ENCODE measurements at regions of chr12 and their contacts with region 1.

Region 1: DNA sequence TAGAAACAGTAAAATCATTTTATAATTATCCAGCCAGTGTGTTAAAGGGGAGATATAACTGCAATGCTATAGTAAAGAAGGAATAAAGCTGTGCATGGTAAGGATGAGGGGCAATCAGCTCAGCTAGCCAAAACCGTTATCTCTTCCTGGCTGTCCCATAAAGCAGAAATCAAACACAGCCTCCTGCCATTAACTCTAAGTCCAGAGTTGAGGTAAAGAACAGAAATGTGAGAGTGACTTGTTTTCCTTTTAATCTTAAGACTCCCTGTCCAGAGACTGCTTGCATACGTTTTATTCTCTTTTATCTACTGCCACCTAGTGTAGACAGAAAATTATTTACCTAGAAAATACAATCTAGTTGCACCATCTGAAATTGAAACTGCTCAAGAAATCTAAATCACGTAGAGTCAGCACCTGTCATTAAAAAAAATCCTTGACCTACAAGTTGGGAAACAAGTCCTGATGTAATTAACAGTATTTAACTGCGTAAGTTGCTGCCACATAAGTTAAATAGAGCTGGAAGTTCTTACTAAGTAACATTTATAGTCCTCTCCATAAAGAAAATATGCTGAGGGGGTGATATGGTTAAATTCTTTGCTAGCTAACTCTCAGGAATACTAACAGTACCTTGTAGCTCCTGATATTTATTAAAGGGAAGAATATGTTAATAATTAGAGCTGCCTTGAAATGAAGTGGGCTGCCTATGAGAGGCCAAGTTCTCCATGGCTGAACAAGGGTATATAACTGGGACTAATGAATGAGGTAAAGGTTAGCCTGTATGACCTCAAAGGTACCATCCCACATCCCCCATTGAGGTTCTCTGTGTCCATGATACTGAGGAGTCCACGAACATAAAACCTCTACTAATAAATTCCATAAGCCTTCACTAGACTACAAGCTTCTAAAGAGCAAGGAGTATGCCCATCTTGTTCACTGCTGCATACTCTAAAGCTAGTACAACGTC is 62.7 kb downstream of the GALNT4 start:
- DNase-seq: no peak
- H3K4me3 ChIP-seq: peak overlapping the region in 1 of 4 donors; percentile 21
- H3K27ac ChIP-seq: peak overlapping the region in 2 of 5 donors; percentile 46 to 75
- H3K4me1 ChIP-seq: peaks cover 0 to 8% of the 10 kb centered on the region in 2 donors
- H3K27me3 ChIP-seq: no peaks in the 10 kb centered on the region
- CTCF ChIP-seq: peak; percentile 37 to 91 (median 71)
- POLR2A ChIP-seq: no peak

Region 2: GRCh38 chr12:89019408-89020120 is 442.4 kb before region 1 on chr12:
- intact Hi-C with region 1: loop called (anchors 5 kb)
- DNase-seq: peak; percentile 73 to 94 (median 81)
- H3K4me3 ChIP-seq: peak overlapping the region in 1 of 4 donors; percentile 51
- H3K27ac ChIP-seq: no peak overlapping the region
- H3K4me1 ChIP-seq: peaks cover 0 to 14% of the 10 kb centered on the region in 2 donors
- H3K27me3 ChIP-seq: no peaks in the 10 kb centered on the region
- CTCF ChIP-seq: peak; percentile 67 to 91 (median 84)
- POLR2A ChIP-seq: no peak

Region 3: DNA sequence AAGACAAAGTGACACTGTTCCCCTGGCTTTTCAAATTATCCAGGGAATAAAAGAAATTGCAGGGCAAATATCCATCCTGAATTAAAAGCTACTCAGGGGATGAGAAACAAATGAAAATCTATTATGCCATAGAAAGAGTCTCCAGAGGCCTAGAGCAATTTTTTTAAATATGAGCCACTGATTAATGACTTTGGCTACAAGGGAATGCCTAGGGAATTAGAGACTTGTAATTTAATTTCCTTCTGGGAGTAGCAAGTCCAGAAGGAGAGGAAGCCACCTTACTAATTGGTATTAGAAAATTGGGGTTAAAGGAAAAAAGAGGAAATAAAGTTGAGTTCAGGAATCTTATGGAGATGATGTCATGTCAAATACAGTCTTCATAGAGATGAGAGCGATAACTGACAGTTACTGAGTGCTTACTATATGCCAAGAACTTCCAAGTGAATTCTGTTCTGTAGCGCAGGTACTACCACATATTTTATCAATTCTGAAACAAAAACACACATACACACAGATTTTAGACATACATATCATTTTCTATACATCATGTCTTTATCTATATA is 414.0 kb before region 1 on chr12:
- intact Hi-C with region 1: loop called in 1 of 2 experiments (anchors 5 kb)
- DNase-seq: no peak
- H3K4me3 ChIP-seq: no peak overlapping the region
- H3K27ac ChIP-seq: no peak overlapping the region
- H3K4me1 ChIP-seq: no peaks in the 10 kb centered on the region
- H3K27me3 ChIP-seq: no peaks in the 10 kb centered on the region
- CTCF ChIP-seq: no peak
- POLR2A ChIP-seq: no peak

Measured in adrenal gland (tissue), 19 donors.